ENCODE measurements at regions of chr5 and their contacts with region 1.

Region 1: DNA sequence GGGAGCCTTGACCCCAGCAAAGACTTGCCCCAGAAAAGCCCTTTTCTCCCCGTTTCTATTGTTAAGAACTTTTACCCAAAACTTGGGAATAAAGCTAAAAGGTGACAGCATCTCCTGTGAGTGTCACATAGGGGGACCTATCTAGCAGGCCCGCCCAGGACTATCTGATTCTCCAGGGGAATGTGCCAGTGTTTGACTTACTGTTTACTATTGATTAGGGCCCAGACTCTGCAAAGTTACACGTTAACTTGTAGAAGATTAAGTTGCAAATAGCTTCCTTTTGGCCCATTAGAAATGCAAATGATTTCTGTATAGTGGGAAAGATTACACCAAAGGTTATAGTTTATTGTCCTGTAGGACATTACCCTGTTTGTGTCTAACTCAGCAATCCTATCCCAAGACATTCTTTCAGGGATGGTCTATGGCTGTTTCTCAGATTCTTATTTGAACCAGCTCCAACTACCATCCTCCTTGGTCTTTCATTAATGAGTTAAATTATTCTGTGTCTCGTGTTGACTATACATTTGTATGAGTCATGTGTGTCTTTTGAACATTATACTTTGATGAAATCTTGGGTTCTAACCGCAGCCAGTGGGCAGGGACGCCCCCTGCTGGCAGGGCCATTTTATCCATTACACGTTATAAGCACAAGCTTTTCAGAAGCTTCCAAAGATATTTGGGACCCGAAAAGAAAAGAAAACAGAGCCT is 60.7 kb downstream of the HRH2 start:
- DNase-seq: peak; percentile 50
- H3K27ac ChIP-seq: no peak overlapping the region
- CTCF ChIP-seq: peak; percentile 54

Region 2: GRCh38 chr5:175729829-175730277 is 11.3 kb after region 1 on chr5:
- CTCF ChIA-PET with region 1: interaction called, 15 read pairs
- POLR2A ChIA-PET with region 1: no interaction called
- DNase-seq: peak; percentile 98
- H3K27ac ChIP-seq: no peak overlapping the region
- CTCF ChIP-seq: peak; percentile 95

Measured in RWPE1 (cell line).